GM13976 (cell line): ENCODE measurements at regions of chr16 and their contacts with region 1.

Region 1: GRCh38 chr16:57416122-57416509 is 11.5 kb downstream of the CCL17 start:
- DNase-seq: no peak
- CTCF ChIP-seq: no peak

Region 2: DNA sequence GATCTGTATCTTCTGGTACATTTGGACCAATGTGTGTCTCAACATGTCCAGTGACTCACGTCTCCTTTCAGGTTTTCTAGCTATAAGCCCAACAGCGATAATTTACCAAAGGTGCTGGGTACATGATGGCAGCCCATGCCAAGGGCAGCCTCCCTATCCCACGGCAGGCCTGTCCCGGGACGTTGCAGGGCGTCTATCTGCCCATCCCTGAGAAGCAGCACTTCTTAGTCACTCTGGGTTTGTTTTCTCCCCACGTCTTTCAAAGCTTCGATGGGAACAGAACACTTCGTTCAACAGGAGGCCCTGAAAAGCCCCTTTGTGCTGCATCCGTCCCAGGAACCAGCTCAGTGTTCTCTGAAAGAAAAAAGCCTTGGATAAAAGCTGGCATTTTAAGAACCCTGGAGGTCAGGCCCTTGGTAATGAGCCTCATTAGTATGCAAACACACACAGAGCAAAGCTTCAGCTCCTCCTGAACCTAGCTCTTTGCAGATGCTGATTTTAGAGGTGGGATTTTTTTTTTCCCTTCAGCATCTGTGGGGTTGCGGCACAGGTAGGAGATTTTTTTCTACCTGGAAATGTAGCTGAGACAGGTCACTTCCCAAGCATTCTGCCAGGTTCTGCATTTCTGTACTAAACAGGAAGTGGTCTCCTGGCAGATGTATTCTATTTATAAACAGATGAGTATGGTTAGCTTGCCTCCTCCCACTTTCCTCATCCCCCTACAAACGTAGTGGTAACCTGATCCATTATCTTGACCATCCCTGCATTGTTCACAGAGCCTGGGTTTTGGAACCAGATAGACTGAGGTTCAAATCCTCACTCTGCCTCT is 868.8 kb before region 1 on chr16:
- in situ Hi-C with region 1: no loop called
- DNase-seq: no peak
- CTCF ChIP-seq: no peak

Region 3: DNA sequence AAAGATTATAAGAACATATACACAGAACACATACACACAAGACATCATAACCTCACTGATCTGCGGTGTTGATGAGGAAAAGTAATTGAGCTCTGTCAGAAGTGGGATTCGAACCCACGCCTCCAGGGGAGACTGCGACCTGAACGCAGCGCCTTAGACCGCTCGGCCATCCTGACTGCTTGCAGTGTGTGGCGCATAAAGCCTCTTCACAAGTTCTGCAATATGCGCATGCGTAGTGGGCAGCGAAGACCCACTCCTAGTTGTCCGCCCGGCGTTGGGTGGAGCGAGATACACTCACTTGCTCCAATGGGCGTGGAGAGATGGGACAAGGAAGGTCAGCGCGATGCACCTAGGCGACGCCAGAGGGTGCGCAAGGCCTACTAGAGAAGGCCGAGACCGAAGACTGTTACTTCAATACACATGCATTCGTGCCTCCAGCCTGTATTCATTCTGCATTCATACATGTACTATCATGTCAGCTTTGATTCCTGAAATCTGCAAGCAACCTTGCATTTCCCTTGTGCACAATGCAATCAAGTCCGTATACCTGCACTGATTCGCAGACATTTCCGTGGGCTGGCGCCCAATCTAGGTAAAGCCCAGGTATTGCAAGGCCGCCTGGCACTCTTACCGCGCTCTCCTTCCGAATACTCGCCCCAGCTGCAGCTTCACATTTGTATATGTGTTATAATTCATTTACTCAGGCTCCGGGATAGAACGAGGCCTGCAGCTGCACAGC is 115.6 kb before region 1 on chr16:
- in situ Hi-C with region 1: loop called (anchors 5 kb)
- DNase-seq: peak; percentile 94
- CTCF ChIP-seq: peak; percentile 91